ENCODE measurements at regions of chr7 and their contacts with region 1.

Region 1: DNA sequence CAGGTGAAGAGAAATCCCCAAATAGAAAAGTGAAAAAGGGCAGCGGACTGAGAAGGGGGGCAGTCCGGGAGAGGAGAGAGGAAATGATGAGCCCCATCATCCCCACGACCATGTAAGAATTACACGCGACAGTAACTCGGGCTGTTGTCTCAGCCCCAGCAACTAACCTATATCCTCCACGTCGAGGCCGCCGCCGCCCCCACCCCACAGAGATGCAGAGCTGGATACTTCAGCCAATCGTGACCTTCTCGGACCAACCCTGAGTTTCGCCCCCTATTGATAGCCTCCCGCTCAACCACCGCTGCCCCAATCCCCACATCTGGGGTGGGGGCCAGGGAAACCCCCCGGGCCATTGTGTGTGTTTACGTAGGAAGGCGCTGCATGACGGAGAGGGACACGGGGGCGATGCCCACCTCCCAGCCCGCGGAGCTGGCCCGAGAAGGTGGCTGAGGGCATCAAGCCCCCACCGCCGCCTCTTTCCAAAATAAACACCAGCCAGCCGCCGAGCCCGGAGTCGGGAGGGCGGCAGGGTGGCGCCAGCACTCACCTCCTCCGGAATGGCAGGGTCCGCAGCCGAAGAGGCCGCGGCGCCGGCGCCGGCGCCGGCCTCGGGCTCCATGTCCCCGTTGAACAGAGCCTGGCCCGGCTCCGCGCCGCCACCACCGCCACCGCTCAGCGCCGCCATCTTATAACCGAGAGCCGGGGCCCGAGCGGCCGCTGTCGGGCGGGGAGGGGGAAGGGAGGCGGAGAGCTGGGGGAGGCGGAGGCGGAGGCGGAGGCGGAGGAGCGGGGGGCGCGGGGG is 509 bp downstream of the BRAF start:
- DNase-seq: peak; percentile 69
- H3K4me3 Mint-ChIP-seq: no peak overlapping the region
- H3K27ac Mint-ChIP-seq: no peak overlapping the region
- H3K4me1 Mint-ChIP-seq: peaks cover 11% of the 10 kb centered on the region
- H3K27me3 Mint-ChIP-seq: no peaks in the 10 kb centered on the region

Region 2: GRCh38 chr7:139340037-139340807 is 1584.0 kb before region 1 on chr7:
- intact Hi-C with region 1: loop called (anchors 5 kb)
- DNase-seq: peak; percentile 97
- H3K4me3 Mint-ChIP-seq: peak overlapping the region; percentile 91
- H3K27ac Mint-ChIP-seq: peak overlapping the region; percentile 100
- H3K4me1 Mint-ChIP-seq: peaks cover 31% of the 10 kb centered on the region
- H3K27me3 Mint-ChIP-seq: peaks cover 8% of the 10 kb centered on the region

Region 3: GRCh38 chr7:140696680-140697446 is 227.4 kb before region 1 on chr7 and contains the start of gene NDUFB2:
- intact Hi-C with region 1: loop called (anchors 1 kb)
- DNase-seq: peak; percentile 85
- H3K4me3 Mint-ChIP-seq: peak within 1 kb of the TSS; percentile 90
- H3K27ac Mint-ChIP-seq: peak within 1 kb of the TSS; percentile 96
- H3K4me1 Mint-ChIP-seq: peaks cover 30% of the 10 kb centered on the region
- H3K27me3 Mint-ChIP-seq: no peaks in the 10 kb centered on the region
- total RNA-seq, gene NDUFB2: 178 and 194 TPM in 2 replicates

Region 4: DNA sequence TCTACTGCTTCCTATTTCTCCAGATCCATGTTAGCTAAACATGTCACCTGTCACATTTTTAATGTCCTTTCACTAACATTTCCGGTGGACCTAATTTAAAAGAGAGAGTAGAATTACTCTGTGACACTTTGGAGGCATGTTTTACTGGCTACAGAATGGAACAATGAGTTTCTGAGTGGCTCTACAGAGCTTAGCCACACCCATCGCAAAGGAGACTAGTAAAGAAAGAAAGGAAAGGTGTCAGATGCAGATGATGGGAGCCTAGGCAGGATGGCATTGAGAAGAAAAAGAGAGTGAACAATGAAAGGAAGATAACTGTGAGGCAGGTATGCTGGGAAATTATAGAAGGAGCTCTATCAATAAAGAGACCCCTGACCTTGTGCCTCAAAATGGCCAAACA is 191.8 kb before region 1 on chr7:
- intact Hi-C with region 1: no loop called
- DNase-seq: no peak
- H3K4me3 Mint-ChIP-seq: no peak overlapping the region
- H3K27ac Mint-ChIP-seq: no peak overlapping the region
- H3K4me1 Mint-ChIP-seq: no peaks in the 10 kb centered on the region
- H3K27me3 Mint-ChIP-seq: no peaks in the 10 kb centered on the region

Region 5: DNA sequence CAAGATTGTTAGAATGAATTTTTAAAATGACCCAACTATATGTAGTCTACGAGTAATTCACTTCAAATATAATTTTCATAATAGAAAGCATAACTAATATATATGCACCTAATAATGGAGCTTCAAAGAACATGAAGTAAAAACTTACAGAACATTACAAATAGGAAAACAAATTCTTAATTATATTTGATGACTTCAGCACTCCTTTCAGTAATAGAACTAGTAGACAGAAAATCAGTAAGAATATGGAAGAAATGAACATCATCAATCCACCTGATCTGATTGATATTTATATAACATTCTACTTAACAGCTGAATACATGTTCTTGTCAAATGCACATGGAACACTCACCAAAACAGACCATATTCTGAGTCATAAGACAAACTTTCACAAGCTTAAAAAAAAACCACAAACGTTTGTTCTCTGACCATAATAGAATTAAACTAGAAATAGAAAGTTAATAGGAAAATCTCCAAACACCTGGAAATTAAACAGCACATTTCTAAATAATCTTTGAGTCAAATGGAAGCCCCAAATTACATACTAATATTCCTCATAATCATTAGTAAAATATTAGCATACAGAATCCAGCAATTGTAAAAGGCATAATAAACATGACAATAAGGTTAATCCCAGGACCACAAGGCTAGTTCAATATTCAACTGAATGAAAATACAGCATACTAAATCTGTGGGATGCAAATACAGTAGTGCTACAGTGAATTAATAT is 47.5 kb before region 1 on chr7:
- intact Hi-C with region 1: loop called (anchors 1 kb)
- DNase-seq: no peak
- H3K4me3 Mint-ChIP-seq: no peak overlapping the region
- H3K27ac Mint-ChIP-seq: no peak overlapping the region
- H3K4me1 Mint-ChIP-seq: peaks cover 29% of the 10 kb centered on the region
- H3K27me3 Mint-ChIP-seq: peaks cover 3% of the 10 kb centered on the region

Region 6: DNA sequence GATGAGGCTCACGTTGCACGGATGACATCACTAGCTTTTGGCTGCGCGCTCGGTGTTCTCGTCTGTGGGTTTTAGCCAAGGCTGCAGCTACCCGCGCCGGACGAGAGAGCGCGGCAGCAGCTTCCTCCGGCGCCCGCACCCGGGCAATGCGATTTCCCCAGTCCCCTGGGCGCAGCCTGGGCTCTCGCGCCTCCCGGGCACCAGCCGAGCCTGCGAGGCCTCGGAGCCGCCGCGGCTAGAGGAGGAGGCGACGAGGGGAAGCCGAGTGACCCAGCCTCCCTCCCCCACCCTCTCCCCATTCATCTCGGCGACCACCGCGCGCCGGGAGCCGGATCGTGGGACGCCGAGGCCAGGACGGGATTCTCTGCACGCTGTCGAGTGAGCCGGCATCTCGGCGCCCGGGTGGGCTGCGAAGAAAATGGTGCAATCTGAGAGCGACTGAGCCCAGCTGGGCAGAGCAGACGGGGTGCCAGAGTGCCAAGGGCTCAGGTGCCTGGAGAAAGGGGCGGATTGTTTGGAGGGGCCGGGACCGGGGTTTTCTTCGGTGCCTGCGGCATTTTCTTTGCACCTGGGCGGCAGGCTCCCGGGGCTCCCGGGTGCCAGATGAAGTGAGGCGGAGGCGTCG is 148.4 kb after region 1 on chr7:
- intact Hi-C with region 1: loop called (anchors 10 kb)
- DNase-seq: peak; percentile 40
- H3K4me3 Mint-ChIP-seq: peak overlapping the region; percentile 79
- H3K27ac Mint-ChIP-seq: no peak overlapping the region
- H3K4me1 Mint-ChIP-seq: peaks cover 36% of the 10 kb centered on the region
- H3K27me3 Mint-ChIP-seq: peaks cover 39% of the 10 kb centered on the region